Sigmoid colon (tissue), 7 donors: ENCODE measurements at regions of chr9 and their contacts with region 1.

Region 1: GRCh38 chr9:136482793-136483588 is at the start of gene SEC16A:
- DNase-seq: peak; percentile 100
- H3K4me3 ChIP-seq: peak within 1 kb of the TSS; percentile 85 to 98 (median 92)
- H3K27ac ChIP-seq: peak within 1 kb of the TSS; percentile 99 to 100 (median 99)
- H3K4me1 ChIP-seq: peaks cover 0 to 25% (median 23%) of the 10 kb centered on the region in 4 donors
- H3K27me3 ChIP-seq: no peaks in the 10 kb centered on the region
- CTCF ChIP-seq: no peak
- EP300 ChIP-seq: no peak
- POLR2A ChIP-seq: peak; percentile 83
- total RNA-seq, gene SEC16A: 22.9 to 33.9 (median 30.2) TPM

Region 2: DNA sequence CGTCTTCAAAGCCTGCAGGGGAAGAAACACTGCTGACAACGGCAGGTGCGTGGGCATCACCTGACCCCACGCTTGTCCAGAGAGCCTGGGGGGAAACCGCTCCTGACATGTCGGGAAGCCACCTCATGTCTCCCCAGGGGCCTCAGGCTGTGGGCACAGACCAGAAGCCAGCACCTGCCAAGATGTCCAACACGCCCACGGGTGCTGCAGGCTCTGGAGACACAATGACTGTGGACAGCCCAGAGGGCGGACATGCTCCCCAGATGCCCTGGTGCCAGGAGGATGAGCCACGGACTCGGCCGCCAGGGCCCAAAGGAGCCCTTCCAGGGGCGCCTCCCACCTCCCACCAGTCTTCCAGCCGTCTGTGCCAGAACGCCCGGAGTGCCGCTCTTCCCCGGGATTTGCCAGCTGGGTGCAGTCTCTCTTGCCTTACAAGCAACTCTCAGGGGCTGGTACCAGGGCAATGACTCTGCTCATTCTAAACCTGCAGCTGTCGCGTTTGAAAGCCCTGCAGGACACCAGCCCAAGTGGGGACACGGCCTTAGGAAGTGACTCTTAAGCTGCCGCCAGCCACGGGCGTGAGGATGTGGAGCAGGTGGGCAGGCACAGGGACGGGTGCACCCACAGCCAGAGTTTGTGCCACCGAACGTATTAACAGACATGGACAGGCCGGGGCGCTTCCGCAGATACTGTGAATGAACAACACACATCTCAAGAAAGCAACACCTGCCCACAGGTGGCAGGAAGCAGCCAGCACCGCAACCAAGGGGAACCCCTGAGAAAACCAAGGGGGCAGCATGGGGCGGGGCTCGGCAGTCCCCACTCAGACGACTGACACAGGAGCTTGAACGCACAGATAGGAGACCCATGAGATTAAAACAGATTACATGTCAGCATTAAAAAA is 271.3 kb before region 1 on chr9:
- intact Hi-C with region 1: no loop called
- DNase-seq: no peak
- H3K4me3 ChIP-seq: no peak overlapping the region
- H3K27ac ChIP-seq: no peak overlapping the region
- H3K4me1 ChIP-seq: no peaks in the 10 kb centered on the region
- H3K27me3 ChIP-seq: no peaks in the 10 kb centered on the region
- CTCF ChIP-seq: no peak
- EP300 ChIP-seq: no peak
- POLR2A ChIP-seq: no peak

Region 3: GRCh38 chr9:136410500-136411287 is 72.3 kb before region 1 on chr9 and contains the starts of genes ENTR1 and PMPCA:
- intact Hi-C with region 1: loop called (anchors 5 kb)
- DNase-seq: peak; percentile 96
- H3K4me3 ChIP-seq: peak within 1 kb of the TSS; percentile 80 to 98 (median 95)
- H3K27ac ChIP-seq: peak within 1 kb of the TSS; percentile 85 to 89 (median 88)
- H3K4me1 ChIP-seq: peaks cover 0 to 28% (median 23%) of the 10 kb centered on the region in 4 donors
- H3K27me3 ChIP-seq: no peaks in the 10 kb centered on the region
- CTCF ChIP-seq: no peak
- EP300 ChIP-seq: peak in 1 of 4 donors; percentile 6
- POLR2A ChIP-seq: peak; percentile 85 to 93
- total RNA-seq, gene ENTR1: 23.2 to 42.7 (median 32.9) TPM
- total RNA-seq, gene PMPCA: 22.9 to 28.5 (median 25.6) TPM

Region 4: GRCh38 chr9:136539427-136540421 is 56.7 kb after region 1 on chr9:
- intact Hi-C with region 1: loop called (anchors 5 kb)
- DNase-seq: peak; percentile 96
- H3K4me3 ChIP-seq: peak overlapping the region; percentile 4 to 29 (median 14)
- H3K27ac ChIP-seq: peak overlapping the region; percentile 80 to 100 (median 96)
- H3K4me1 ChIP-seq: peaks cover 0 to 93% (median 90%) of the 10 kb centered on the region in 4 donors
- H3K27me3 ChIP-seq: no peaks in the 10 kb centered on the region
- CTCF ChIP-seq: no peak
- EP300 ChIP-seq: peak in 1 of 4 donors; percentile 48
- POLR2A ChIP-seq: peak in 1 of 2 donors; percentile 51

Region 5: DNA sequence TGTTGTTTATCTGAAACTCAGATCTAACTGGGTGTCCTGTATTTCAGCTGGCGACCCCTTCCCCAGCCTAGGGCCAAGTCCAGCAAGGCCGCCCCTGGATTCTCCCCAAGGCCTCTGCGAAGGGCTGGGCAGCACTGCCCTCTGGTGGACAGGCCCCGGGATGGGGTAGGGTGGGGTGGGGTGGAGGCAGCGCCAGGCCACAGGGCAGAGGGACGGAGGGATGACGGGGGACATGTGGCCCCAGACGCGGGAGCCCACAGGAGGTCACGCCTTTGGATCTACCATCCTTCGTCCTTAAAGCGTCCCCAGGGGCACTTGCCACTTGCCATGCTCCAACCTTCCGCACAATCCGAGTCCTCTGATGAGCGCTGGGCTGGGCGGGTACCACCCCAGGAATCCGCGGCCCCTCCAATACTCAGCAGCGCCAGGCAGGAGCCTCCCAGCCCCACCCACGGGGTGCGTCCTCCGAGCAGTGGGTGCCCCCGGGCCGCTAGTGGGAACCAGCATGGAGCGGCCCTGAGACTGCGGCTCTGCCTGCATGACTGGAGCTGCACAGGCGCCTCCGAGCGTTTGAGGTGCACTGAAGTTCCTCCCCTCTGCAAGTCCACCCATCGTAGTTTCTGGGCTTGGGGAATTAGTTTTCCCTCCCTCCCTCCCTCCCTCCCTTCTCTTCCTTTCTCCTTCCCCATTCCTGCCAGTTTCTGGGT is 211.4 kb after region 1 on chr9:
- intact Hi-C with region 1: loop called (anchors 5 kb)
- DNase-seq: no peak
- H3K4me3 ChIP-seq: no peak overlapping the region
- H3K27ac ChIP-seq: peak overlapping the region in 1 of 4 donors; percentile 14
- H3K4me1 ChIP-seq: peaks cover 0 to 43% (median 26%) of the 10 kb centered on the region in 4 donors
- H3K27me3 ChIP-seq: no peaks in the 10 kb centered on the region
- CTCF ChIP-seq: peak in 3 of 4 experiments; percentile 37 to 68 (median 64)
- EP300 ChIP-seq: no peak
- POLR2A ChIP-seq: no peak

Region 6: DNA sequence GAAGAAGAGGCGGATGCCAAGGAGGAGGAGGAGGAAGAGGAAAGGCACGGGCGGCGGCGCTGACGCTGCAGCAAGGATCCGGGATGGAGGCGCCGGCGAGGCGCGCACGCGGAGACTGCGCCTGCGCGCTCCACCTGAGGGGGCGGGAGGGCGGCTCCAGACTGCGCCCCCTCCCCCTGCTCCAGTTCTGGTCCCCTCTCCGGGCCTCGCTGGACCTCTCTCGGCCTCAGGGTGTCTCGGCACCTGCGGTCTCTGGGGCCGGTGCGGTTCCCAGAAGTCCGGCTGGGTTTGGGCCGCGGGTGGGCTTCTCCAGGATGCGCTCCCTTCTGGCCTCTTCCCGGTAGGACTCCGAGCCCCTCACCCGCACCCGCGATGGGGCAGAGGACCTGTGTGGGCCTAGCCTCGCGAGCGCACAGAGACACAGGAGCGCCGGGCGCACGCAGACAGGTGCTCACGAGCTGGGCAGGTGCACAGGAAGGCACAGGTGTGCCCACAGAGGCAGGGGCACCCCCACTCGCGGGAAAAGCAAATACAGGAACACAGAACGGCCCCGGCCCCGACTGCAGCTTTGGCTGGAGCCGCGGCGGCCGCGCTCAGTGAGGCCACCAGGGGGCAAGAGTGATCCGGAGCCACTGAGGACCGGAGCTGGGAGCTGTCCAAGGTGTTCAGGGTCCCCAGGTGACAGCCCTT is 563.3 kb after region 1 on chr9 and contains the start of gene NPDC1:
- intact Hi-C with region 1: no loop called
- DNase-seq: peak; percentile 87
- H3K4me3 ChIP-seq: peak within 1 kb of the TSS; percentile 40 to 74 (median 65)
- H3K27ac ChIP-seq: peak within 1 kb of the TSS; percentile 65 to 72 (median 68)
- H3K4me1 ChIP-seq: peaks cover 0 to 43% (median 38%) of the 10 kb centered on the region in 4 donors
- H3K27me3 ChIP-seq: peaks cover 22 to 45% (median 41%) of the 10 kb centered on the region in 3 donors
- CTCF ChIP-seq: peak; percentile 78 to 84 (median 81)
- EP300 ChIP-seq: no peak
- POLR2A ChIP-seq: no peak
- total RNA-seq, gene NPDC1: 21.4 to 101 (median 42.4) TPM